ENCODE measurements at regions of chr2 and their contacts with region 1.

Region 1: GRCh38 chr2:27264753-27265535 is 2.1 kb upstream of the SLC30A3 start:
- DNase-seq: peak; percentile 81
- ATAC-seq: peak; percentile 75

Region 2: DNA sequence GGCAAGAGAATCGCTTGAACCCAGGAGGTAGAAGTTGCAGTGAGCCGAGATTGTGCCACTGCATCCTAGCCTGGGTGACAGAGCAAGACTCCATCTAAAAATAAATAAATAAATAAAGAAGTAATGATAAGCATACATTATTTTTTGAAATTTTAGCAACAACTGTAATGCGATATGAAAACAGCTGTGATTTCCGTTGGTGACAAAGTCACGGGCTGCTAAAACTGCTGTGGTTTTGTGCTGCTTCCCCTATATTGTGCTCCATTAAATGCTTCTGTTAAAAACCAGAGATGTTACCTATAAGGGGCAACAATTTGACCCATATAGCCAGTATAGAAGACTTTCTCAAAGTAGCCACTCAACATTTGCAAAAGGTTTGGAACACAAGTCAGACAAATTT is 25.6 kb after region 1 on chr2:
- intact Hi-C with region 1: no loop called
- DNase-seq: no peak
- ATAC-seq: no peak

Region 3: GRCh38 chr2:27303093-27304025 is 38.4 kb after region 1 on chr2:
- intact Hi-C with region 1: loop called (anchors 5 kb)
- DNase-seq: no peak
- ATAC-seq: peak; percentile 61

Region 4: DNA sequence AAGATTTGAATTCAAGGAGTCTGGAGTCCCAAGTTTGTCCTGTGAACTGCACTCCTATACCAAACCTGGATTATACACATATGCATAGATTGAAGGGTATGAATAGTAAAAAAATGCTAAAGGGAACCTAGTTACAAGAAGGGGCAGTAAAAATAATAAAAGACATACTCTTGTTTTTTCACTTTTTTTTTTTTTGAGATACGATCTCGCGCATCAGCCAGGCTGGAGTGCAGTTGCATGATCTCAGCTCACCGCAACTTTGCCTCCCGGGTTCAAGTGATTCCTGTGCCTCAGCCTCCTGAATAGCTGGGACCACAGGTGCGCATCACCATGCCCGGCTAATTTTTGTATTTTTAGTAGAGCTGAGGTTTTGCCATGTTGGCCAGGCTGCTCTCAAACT is 199.5 kb after region 1 on chr2:
- intact Hi-C with region 1: no loop called
- DNase-seq: no peak
- ATAC-seq: no peak

Measured in Right ventricle myocardium inferior (tissue), 1 donor.